ENCODE measurements at regions of chr22 and their contacts with region 1.

Region 1: GRCh38 chr22:29245637-29246385 is 22.0 kb downstream of the RHBDD3 start:
- DNase-seq: peak; percentile 70
- H3K4me3 ChIP-seq: no peak overlapping the region
- H3K27ac ChIP-seq: no peak overlapping the region
- H3K4me1 ChIP-seq: no peaks in the 10 kb centered on the region
- H3K27me3 ChIP-seq: no peaks in the 10 kb centered on the region
- CTCF ChIP-seq: peak; percentile 98

Region 2: GRCh38 chr22:28594797-28595462 is 650.9 kb before region 1 on chr22:
- CTCF ChIA-PET with region 1: no interaction called
- POLR2A ChIA-PET with region 1: no interaction called
- intact Hi-C with region 1: loop called (anchors 10 kb)
- DNase-seq: peak; percentile 86
- H3K4me3 ChIP-seq: no peak overlapping the region
- H3K27ac ChIP-seq: no peak overlapping the region
- H3K4me1 ChIP-seq: peaks cover 18% of the 10 kb centered on the region
- H3K27me3 ChIP-seq: no peaks in the 10 kb centered on the region
- CTCF ChIP-seq: peak; percentile 83

Region 3: GRCh38 chr22:28855355-28856094 is 390.3 kb before region 1 on chr22:
- CTCF ChIA-PET with region 1: interaction called, 9 read pairs
- POLR2A ChIA-PET with region 1: no interaction called
- intact Hi-C with region 1: loop called (anchors 2 kb)
- DNase-seq: peak; percentile 76
- H3K4me3 ChIP-seq: no peak overlapping the region
- H3K27ac ChIP-seq: no peak overlapping the region
- H3K4me1 ChIP-seq: no peaks in the 10 kb centered on the region
- H3K27me3 ChIP-seq: no peaks in the 10 kb centered on the region
- CTCF ChIP-seq: peak; percentile 95

Region 4: GRCh38 chr22:29040385-29041275 is 205.2 kb before region 1 on chr22:
- CTCF ChIA-PET with region 1: interaction called, 4 read pairs
- POLR2A ChIA-PET with region 1: no interaction called
- intact Hi-C with region 1: loop called (anchors 10 kb)
- DNase-seq: peak; percentile 83
- H3K4me3 ChIP-seq: no peak overlapping the region
- H3K27ac ChIP-seq: no peak overlapping the region
- H3K4me1 ChIP-seq: no peaks in the 10 kb centered on the region
- H3K27me3 ChIP-seq: no peaks in the 10 kb centered on the region
- CTCF ChIP-seq: peak; percentile 98

Region 5: DNA sequence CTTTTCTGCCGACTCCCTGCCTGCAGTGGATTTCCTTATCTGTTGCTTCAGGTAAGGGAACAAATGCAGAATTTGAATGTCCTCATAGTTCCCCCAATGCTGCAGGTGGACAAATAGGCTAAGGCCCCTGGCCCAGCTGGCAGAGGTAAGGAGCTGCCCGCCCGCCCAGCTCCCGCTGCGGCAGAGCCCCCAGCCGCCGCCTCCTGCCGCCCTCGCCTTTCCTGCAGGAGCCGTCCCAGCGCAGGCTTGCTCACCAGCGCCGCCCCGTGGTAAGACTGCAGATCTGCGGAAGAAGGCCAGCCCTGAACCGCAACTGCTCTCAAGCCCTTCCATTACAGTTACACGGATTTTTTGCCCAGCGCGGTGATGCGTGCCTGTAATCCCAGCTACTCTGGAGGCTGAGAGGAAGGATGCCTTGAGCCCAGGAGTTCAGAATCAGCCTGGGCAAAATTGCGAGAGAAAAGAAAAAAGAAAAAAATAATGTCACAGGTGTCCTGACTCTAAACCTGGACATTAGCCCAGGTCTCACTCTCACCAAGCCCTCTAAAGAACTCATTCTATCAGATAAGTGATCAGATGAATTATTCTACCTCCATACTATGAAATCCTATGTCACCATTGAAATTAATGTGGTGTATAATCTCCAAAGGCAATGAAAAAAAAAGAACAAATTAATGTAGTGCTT is 91.3 kb before region 1 on chr22:
- CTCF ChIA-PET with region 1: interaction called, 5 read pairs
- POLR2A ChIA-PET with region 1: no interaction called
- intact Hi-C with region 1: loop called (anchors 5 kb)
- DNase-seq: peak; percentile 78
- H3K4me3 ChIP-seq: no peak overlapping the region
- H3K27ac ChIP-seq: no peak overlapping the region
- H3K4me1 ChIP-seq: peaks cover 30% of the 10 kb centered on the region
- H3K27me3 ChIP-seq: no peaks in the 10 kb centered on the region
- CTCF ChIP-seq: peak; percentile 99

Region 6: GRCh38 chr22:29202212-29203192 is 43.3 kb before region 1 on chr22:
- CTCF ChIA-PET with region 1: interaction called, 4 read pairs
- POLR2A ChIA-PET with region 1: no interaction called
- intact Hi-C with region 1: loop called (anchors 5 kb)
- DNase-seq: peak; percentile 61
- H3K4me3 ChIP-seq: no peak overlapping the region
- H3K27ac ChIP-seq: no peak overlapping the region
- H3K4me1 ChIP-seq: peaks cover 19% of the 10 kb centered on the region
- H3K27me3 ChIP-seq: no peaks in the 10 kb centered on the region
- CTCF ChIP-seq: peak; percentile 58

Measured in A673 (cell line).